ENCODE measurements at regions of chr11 and their contacts with region 1.

Region 1: GRCh38 chr11:9015677-9016076 is 11.9 kb upstream of the NRIP3 start:
- DNase-seq: peak; percentile 72
- H3K4me3 ChIP-seq: no peak overlapping the region
- H3K27ac ChIP-seq: no peak overlapping the region
- H3K4me1 ChIP-seq: no peaks in the 10 kb centered on the region
- H3K27me3 ChIP-seq: no peaks in the 10 kb centered on the region
- CTCF ChIP-seq: peak; percentile 76

Region 2: GRCh38 chr11:8998017-8998416 is 17.7 kb before region 1 on chr11:
- CTCF ChIA-PET with region 1: no interaction called
- POLR2A ChIA-PET with region 1: no interaction called
- intact Hi-C with region 1: no loop called
- DNase-seq: no peak
- H3K4me3 ChIP-seq: no peak overlapping the region
- H3K27ac ChIP-seq: no peak overlapping the region
- H3K4me1 ChIP-seq: peaks cover under 1% of the 10 kb centered on the region
- H3K27me3 ChIP-seq: peaks cover 16% of the 10 kb centered on the region
- CTCF ChIP-seq: no peak

Region 3: GRCh38 chr11:9137293-9138132 is 121.8 kb after region 1 on chr11:
- CTCF ChIA-PET with region 1: interaction called, 33 read pairs
- POLR2A ChIA-PET with region 1: no interaction called
- intact Hi-C with region 1: loop called (anchors 2 kb)
- DNase-seq: peak; percentile 79
- H3K4me3 ChIP-seq: no peak overlapping the region
- H3K27ac ChIP-seq: no peak overlapping the region
- H3K4me1 ChIP-seq: peaks cover 24% of the 10 kb centered on the region
- H3K27me3 ChIP-seq: no peaks in the 10 kb centered on the region
- CTCF ChIP-seq: peak; percentile 90